ENCODE measurements at regions of chr4 and their contacts with region 1.

Region 1: DNA sequence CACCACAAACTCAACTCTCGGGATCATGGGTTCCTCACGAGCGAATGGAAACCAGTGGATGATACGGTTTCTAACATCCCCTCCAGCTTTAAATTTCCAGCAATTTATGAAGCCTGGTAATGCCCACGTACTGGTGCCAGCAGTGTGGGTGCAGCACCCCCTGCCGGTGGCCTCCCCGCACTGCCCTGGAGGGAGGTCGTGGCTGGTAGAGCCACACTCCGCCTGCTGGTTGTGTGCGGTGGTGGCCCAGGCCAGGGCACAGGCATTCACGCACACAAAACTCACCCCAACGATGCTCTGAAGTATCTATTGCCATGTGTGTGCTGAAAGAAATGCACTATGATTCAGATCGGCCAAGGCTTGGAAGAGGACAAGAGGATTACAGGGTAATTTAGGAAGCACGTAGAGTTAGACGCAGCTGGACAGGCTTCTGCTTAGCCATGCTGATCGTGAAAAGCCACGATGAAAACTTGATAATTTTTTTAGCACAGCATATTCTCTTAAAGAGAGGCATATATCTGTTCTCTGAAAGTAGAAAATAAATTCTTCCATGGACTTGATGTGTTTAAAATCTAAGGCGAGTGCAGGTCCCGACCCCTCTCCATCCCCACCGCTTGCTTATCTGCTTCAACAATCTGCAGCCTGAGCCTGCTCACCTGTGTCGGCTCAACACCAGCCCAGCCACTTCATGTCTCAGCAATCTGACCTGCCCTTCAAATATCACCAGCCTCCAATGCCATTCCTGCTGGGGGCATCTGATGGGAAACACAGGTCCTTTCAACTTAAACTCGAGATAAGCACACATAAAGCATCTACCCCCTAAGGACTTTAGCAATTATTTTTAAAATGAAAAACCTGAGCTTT is 59.0 kb downstream of the SCD5 start:
- DNase-seq: peak; percentile 63
- H3K4me3 ChIP-seq: no peak overlapping the region
- H3K27ac ChIP-seq: no peak overlapping the region
- H3K4me1 ChIP-seq: no peaks in the 10 kb centered on the region
- H3K27me3 ChIP-seq: peaks cover 3% of the 10 kb centered on the region
- CTCF ChIP-seq: peak; percentile 91

Region 2: GRCh38 chr4:82149750-82150149 is 589.8 kb before region 1 on chr4:
- intact Hi-C with region 1: no loop called
- DNase-seq: no peak
- H3K4me3 ChIP-seq: no peak overlapping the region
- H3K27ac ChIP-seq: no peak overlapping the region
- H3K4me1 ChIP-seq: no peaks in the 10 kb centered on the region
- H3K27me3 ChIP-seq: no peaks in the 10 kb centered on the region
- CTCF ChIP-seq: no peak

Region 3: DNA sequence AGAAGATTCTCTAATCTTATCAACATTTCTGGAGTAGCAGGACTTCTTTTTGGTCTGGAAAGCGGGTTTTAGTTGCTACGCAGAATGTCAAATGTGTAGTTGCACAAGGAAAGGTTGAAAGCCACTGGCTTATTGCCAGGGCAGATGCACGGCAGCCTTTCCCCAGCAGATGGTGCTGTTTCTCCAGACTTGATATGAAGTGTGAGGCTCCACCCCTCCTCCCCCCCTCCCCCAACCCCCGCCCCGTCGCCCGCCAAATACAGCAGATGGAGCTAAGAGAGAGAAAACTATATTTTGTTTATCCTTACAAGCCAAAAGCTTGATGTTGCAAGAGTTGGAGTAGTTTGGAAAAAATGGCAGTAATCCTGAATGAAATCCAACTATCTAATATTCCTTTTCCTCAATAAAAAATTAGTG is 277.1 kb before region 1 on chr4:
- intact Hi-C with region 1: loop called (anchors 2 kb)
- DNase-seq: peak; percentile 84
- H3K4me3 ChIP-seq: no peak overlapping the region
- H3K27ac ChIP-seq: peak overlapping the region; percentile 49
- H3K4me1 ChIP-seq: peaks cover 13% of the 10 kb centered on the region
- H3K27me3 ChIP-seq: no peaks in the 10 kb centered on the region
- CTCF ChIP-seq: peak; percentile 95

Region 4: GRCh38 chr4:82900331-82901128 is 161.0 kb after region 1 on chr4 and contains the start of gene THAP9:
- intact Hi-C with region 1: no loop called
- DNase-seq: peak; percentile 98
- H3K4me3 ChIP-seq: peak within 1 kb of the TSS; percentile 78
- H3K27ac ChIP-seq: peak within 1 kb of the TSS; percentile 100
- H3K4me1 ChIP-seq: peaks cover 59% of the 10 kb centered on the region
- H3K27me3 ChIP-seq: no peaks in the 10 kb centered on the region
- CTCF ChIP-seq: no peak
- total RNA-seq, gene THAP9: 5.6 TPM